Common myeloid progenitor, CD34-positive (primary cell): ENCODE measurements at regions of chr7 and their contacts with region 1.

Region 1: DNA sequence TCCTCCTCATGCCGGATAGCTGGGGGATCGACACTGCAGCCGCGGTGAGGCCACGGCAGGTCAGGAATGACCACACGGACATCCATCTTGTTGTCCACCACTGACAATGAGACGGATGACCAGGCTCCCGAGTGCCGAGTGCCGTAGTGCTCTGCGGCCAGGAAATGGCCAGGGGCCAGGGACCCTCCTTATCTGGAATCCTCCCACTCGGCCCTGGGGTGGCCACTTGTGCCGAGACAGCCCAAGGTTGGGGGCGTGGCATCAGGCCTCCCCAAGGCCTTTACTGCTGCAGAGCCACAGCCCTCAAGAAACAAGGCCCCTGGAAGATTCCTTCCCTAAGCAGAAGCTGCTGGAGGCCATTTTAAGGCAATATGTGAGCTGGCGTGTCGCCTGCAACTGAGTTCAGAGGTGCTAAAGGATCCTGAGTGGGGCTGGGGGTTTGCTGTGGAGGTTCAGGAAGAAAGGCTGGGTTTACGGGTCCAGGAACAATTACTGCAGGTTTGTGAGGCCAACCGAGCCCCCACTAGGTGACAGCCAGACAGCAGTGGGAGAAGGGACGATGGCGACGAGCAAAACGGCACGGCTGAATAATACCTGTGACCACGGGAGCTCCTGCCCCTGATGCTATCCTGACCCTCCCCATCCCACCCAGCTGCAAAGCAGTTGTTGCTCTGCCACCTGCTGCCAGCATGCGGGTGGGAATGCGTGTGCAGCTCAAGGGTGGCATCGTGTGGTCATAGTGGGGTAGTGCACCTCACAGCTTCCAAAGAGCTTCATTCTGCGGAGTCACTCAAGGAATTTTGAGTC is 31.6 kb upstream of the LEP start:
- DNase-seq: peak; percentile 71 to 88 (median 81)
- H3K4me3 ChIP-seq: no peak overlapping the region
- H3K27ac ChIP-seq: no peak overlapping the region
- H3K4me1 ChIP-seq: peaks cover 0 to 1% (median 0%) of the 10 kb centered on the region in 4 experiments
- H3K27me3 ChIP-seq: peaks cover 0 to 7% (median 2%) of the 10 kb centered on the region in 5 experiments

Region 2: GRCh38 chr7:127708788-127709187 is 500.6 kb before region 1 on chr7:
- CTCF ChIA-PET with region 1: interaction called, 188 read pairs
- POLR2A ChIA-PET with region 1: no interaction called
- DNase-seq: peak; percentile 81 to 92 (median 86)
- H3K4me3 ChIP-seq: no peak overlapping the region
- H3K27ac ChIP-seq: no peak overlapping the region
- H3K4me1 ChIP-seq: no peaks in the 10 kb centered on the region
- H3K27me3 ChIP-seq: no peaks in the 10 kb centered on the region

Region 3: DNA sequence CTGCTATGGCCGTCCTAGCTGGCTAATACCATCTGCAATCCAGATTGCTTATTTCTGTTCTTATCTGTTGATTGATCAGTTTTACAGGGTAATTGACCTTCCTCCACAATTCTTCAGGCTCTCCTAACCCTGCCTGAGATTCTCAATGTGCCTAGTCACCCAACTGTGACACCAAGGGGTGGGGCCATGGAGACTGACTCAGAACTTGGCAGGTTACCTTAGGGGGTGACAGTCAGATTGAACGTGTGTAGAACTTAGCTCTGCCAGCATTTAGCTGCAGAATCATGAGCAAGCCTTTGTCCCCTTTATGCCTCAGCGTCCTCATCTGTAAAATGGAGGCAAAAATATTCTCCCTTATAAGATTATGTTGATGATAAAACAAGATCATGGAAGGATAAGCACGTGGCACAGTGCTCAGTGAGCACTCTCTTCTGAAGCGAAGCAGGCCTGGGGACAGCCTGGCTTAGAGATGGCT is 12.5 kb after region 1 on chr7:
- CTCF ChIA-PET with region 1: interaction called, 38 read pairs
- POLR2A ChIA-PET with region 1: no interaction called
- DNase-seq: peak; percentile 22 to 73 (median 67)
- H3K4me3 ChIP-seq: no peak overlapping the region
- H3K27ac ChIP-seq: no peak overlapping the region
- H3K4me1 ChIP-seq: peaks cover 2 to 17% (median 5%) of the 10 kb centered on the region in 4 experiments
- H3K27me3 ChIP-seq: peaks cover 0 to 2% (median 0%) of the 10 kb centered on the region in 5 experiments

Region 4: DNA sequence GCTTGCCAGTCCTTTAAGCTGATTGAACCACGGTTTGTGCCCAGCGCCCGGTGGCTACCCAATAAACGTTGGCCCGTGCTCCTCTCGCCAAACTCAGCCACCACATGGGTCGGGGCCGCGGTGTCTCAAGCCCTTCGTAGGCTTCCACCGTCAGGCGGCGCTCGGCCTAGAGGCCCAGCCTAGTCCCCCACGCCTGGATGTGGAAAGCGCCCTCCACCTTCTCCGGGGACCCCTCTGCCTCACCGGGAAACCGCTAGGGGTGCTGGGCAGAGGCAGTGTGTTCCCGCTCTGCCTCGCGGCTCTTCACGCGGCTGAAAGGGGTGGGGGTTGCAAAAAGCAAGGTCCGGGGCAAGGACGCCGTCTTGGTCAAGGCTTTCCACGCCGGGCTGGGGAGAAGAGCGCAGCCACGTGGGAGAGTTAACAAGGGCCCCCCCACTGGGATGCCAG is 61.4 kb after region 1 on chr7:
- CTCF ChIA-PET with region 1: no interaction called
- POLR2A ChIA-PET with region 1: no interaction called
- DNase-seq: peak in 2 of 3 donors; percentile 22 to 33
- H3K4me3 ChIP-seq: no peak overlapping the region
- H3K27ac ChIP-seq: no peak overlapping the region
- H3K4me1 ChIP-seq: peaks cover 0 to 12% (median 4%) of the 10 kb centered on the region in 4 experiments
- H3K27me3 ChIP-seq: peaks cover 0 to 3% (median 0%) of the 10 kb centered on the region in 5 experiments

Region 5: GRCh38 chr7:128287556-128287955 is 78.1 kb after region 1 on chr7:
- CTCF ChIA-PET with region 1: no interaction called
- POLR2A ChIA-PET with region 1: no interaction called
- DNase-seq: no peak
- H3K4me3 ChIP-seq: no peak overlapping the region
- H3K27ac ChIP-seq: no peak overlapping the region
- H3K4me1 ChIP-seq: no peaks in the 10 kb centered on the region
- H3K27me3 ChIP-seq: no peaks in the 10 kb centered on the region

Region 6: DNA sequence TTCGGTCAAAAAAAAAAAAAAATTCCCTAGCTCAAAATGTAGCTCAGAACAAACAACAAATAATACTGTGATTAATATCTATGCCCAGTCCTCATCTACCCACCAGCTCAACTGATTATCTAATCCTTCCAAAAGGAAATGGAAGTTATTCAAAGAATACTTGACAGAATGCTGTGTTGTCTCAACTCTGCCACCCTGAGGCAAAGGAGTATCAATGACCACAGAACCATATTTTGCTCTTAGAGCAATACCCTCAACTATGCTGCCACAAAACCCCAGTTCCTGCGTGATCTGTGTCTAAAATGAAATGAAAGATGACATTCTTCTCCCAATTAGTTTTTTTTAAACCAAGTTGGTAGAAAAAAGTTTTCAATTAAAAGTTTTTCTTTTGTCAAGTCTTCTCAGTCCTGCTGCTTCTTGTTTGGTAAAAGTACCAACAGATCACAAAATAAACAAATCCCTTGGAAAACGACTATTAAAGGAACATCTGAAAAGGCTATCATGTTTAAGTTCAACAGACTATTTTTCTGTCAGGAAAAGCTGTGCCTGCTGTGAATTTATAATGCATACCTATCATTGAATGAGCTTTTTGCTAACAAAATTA is 112.7 kb after region 1 on chr7:
- CTCF ChIA-PET with region 1: interaction called, 14 read pairs
- POLR2A ChIA-PET with region 1: no interaction called
- DNase-seq: peak; percentile 70 to 84 (median 80)
- H3K4me3 ChIP-seq: no peak overlapping the region
- H3K27ac ChIP-seq: no peak overlapping the region
- H3K4me1 ChIP-seq: peaks cover 25 to 59% (median 54%) of the 10 kb centered on the region in 4 experiments
- H3K27me3 ChIP-seq: no peaks in the 10 kb centered on the region